Activated CD4-positive, alpha-beta T cell treated with anti-CD3 and anti-CD28 coated beads for 36 hours (primary cell): ENCODE measurements at regions of chr12 and their contacts with region 1.

Region 1: GRCh38 chr12:55738123-55739024 is 4.5 kb upstream of the GDF11 start:
- DNase-seq: peak; percentile 88
- ATAC-seq: peak; percentile 82
- H3K4me3 Mint-ChIP-seq: peak overlapping the region; percentile 68
- H3K27ac Mint-ChIP-seq: peak overlapping the region; percentile 76
- H3K4me1 Mint-ChIP-seq: peaks cover 23% of the 10 kb centered on the region
- H3K27me3 Mint-ChIP-seq: no peaks in the 10 kb centered on the region

Region 2: DNA sequence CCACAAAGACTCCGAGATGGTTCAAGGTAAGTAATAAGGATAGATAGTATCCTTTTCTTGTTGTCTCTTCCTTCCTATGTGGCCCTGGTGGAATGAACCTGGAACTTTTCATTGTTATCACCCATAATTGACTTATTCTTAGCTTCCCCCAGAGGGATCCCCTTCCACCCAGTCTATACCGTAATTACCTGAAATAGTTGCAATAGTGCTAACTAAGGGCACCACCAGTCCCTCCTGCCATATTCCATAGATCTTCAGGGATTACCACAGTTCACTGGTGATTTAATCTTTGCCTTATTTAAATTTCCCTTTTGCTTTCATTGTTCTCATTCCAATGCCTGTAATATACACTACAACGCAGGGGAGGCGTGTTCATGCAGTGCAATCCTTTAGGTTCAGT is 626.0 kb before region 1 on chr12:
- CTCF ChIA-PET with region 1: no interaction called
- POLR2A ChIA-PET with region 1: no interaction called
- intact Hi-C with region 1: no loop called
- DNase-seq: no peak
- ATAC-seq: no peak
- H3K4me3 Mint-ChIP-seq: no peak overlapping the region
- H3K27ac Mint-ChIP-seq: no peak overlapping the region
- H3K4me1 Mint-ChIP-seq: no peaks in the 10 kb centered on the region
- H3K27me3 Mint-ChIP-seq: peaks cover 4% of the 10 kb centered on the region

Region 3: GRCh38 chr12:55582066-55582465 is 156.3 kb before region 1 on chr12:
- CTCF ChIA-PET with region 1: no interaction called
- POLR2A ChIA-PET with region 1: no interaction called
- intact Hi-C with region 1: no loop called
- DNase-seq: no peak
- ATAC-seq: no peak
- H3K4me3 Mint-ChIP-seq: no peak overlapping the region
- H3K27ac Mint-ChIP-seq: no peak overlapping the region
- H3K4me1 Mint-ChIP-seq: no peaks in the 10 kb centered on the region
- H3K27me3 Mint-ChIP-seq: peaks cover 23% of the 10 kb centered on the region

Region 4: DNA sequence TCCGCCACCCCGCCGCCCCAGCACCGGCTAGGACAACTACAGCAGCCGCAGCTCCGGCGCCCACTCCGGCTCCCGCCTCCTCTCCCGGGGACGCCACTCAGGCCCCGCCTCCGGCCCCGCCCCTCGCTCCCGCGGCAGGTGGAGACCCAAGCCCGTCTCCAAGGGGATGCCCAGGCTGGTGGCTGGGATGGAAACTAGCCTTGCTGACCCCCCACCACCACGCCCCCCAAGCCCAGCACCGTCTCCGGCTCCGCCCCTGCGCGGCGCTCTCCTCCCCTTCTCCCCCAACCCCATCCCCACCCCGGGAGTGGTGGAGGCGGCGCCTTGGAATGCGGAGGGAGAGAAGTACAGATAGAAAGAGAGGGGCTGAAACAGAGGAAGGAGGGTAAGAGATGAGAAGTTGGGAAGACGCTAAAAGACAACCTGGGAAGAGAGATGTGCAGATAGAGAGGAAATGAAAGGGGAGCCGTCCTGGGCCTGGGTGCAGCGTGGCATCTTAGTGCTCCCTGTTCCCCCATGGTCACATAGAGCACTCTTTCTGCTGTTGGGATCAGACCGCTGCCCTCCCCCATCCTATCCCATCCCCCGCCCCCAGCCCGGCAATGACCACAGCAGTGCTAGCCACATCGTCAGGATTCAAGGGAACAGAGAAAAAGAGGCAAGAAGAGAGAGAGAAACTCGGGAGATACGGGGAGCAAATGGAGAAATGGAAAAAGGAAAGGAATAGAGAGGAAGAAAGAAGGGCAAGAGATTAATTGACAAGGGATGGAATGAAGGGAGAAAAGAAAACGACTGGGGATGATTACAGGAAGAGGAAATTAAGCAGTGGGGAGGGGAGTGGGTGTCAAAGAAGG is 30.3 kb before region 1 on chr12 and contains the start of gene ITGA7:
- CTCF ChIA-PET with region 1: interaction called, 13 read pairs
- POLR2A ChIA-PET with region 1: no interaction called
- intact Hi-C with region 1: no loop called
- DNase-seq: peak; percentile 75
- ATAC-seq: peak; percentile 86
- H3K4me3 Mint-ChIP-seq: peak within 1 kb of the TSS; percentile 70
- H3K27ac Mint-ChIP-seq: no peak within 1 kb of the TSS
- H3K4me1 Mint-ChIP-seq: peaks cover 18% of the 10 kb centered on the region
- H3K27me3 Mint-ChIP-seq: peaks cover 20% of the 10 kb centered on the region
- total RNA-seq, gene ITGA7: 5.5 to 5.6 TPM

Region 5: GRCh38 chr12:55797068-55797467 is 58.7 kb after region 1 on chr12:
- CTCF ChIA-PET with region 1: interaction called, 53 read pairs
- POLR2A ChIA-PET with region 1: no interaction called
- intact Hi-C with region 1: loop called (anchors 1 to 2 kb)
- DNase-seq: peak; percentile 20
- ATAC-seq: no peak
- H3K4me3 Mint-ChIP-seq: no peak overlapping the region
- H3K27ac Mint-ChIP-seq: no peak overlapping the region
- H3K4me1 Mint-ChIP-seq: peaks cover 8% of the 10 kb centered on the region
- H3K27me3 Mint-ChIP-seq: no peaks in the 10 kb centered on the region

Region 6: DNA sequence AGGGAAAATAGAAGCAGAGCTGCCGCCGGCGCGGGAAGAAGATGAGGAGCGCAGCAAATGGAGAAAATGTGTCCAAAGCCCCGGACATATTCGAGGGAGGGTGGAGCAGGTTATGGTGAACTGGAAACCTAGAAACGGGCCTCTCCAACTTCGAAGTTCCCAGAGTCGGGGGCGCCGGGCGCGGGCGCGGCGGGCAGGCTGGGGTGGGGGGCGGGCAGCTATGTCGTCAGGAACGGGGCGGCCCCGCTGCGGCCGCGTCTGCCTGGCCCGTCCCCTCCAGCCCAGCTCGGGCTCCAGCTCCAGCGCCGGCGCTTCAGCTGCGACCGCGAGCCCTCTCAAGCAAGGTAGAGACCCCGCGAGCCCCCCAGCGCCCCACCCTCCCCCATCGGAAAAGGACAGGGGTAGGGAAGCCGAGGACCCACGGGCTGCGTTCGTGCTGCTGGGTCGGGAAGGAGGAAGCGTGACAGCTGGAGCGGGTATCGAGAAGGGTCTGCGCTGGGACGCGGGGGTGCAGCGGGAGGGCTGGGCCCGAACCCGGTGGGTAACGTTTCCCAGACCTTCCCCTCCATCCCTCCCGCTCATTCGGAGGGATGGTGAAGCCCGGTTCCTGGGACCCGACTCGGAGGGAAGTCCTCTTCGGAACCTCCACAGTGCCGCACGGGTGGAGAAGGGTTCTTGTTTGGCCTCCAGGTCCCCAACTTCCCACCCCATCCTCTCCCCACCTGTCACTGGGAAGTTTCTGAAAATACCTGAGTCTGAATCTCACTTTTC is 193.6 kb after region 1 on chr12:
- CTCF ChIA-PET with region 1: interaction called, 43 read pairs
- POLR2A ChIA-PET with region 1: no interaction called
- intact Hi-C with region 1: loop called (anchors 2 kb)
- DNase-seq: peak; percentile 54
- ATAC-seq: no peak
- H3K4me3 Mint-ChIP-seq: peak overlapping the region; percentile 100
- H3K27ac Mint-ChIP-seq: peak overlapping the region; percentile 99
- H3K4me1 Mint-ChIP-seq: peaks cover 59% of the 10 kb centered on the region
- H3K27me3 Mint-ChIP-seq: no peaks in the 10 kb centered on the region

Region 7: GRCh38 chr12:55996715-55997534 is 258.6 kb after region 1 on chr12 and contains the start of gene SUOX:
- CTCF ChIA-PET with region 1: interaction called, 13 read pairs
- POLR2A ChIA-PET with region 1: no interaction called
- intact Hi-C with region 1: no loop called
- DNase-seq: peak; percentile 65
- ATAC-seq: peak; percentile 87
- H3K4me3 Mint-ChIP-seq: peak within 1 kb of the TSS; percentile 56
- H3K27ac Mint-ChIP-seq: peak within 1 kb of the TSS; percentile 37
- H3K4me1 Mint-ChIP-seq: peaks cover 20% of the 10 kb centered on the region
- H3K27me3 Mint-ChIP-seq: peaks cover 3% of the 10 kb centered on the region
- total RNA-seq, gene SUOX: 2.9 to 3.4 TPM

Region 8: GRCh38 chr12:56189176-56189917 is 451.0 kb after region 1 on chr12 and contains the start of gene SMARCC2:
- CTCF ChIA-PET with region 1: interaction called, 6 read pairs
- POLR2A ChIA-PET with region 1: no interaction called
- intact Hi-C with region 1: loop called in 1 of 2 experiments (anchors 1 kb)
- DNase-seq: peak; percentile 94
- ATAC-seq: peak; percentile 82
- H3K4me3 Mint-ChIP-seq: peak within 1 kb of the TSS; percentile 82
- H3K27ac Mint-ChIP-seq: peak within 1 kb of the TSS; percentile 96
- H3K4me1 Mint-ChIP-seq: peaks cover 38% of the 10 kb centered on the region
- H3K27me3 Mint-ChIP-seq: no peaks in the 10 kb centered on the region
- total RNA-seq, gene SMARCC2: 96.9 to 123 TPM